ENCODE measurements at regions of chr19 and their contacts with region 1.

Region 1: GRCh38 chr19:5690125-5690954 is at the start of gene RPL36:
- DNase-seq: peak; percentile 97 to 99
- H3K4me3 ChIP-seq: peak within 1 kb of the TSS; percentile 51 to 94 (median 53)
- H3K27ac ChIP-seq: peak within 1 kb of the TSS; percentile 81 to 96 (median 91)
- H3K4me1 ChIP-seq: peaks cover 19 to 28% of the 10 kb centered on the region in 2 donors
- H3K27me3 ChIP-seq: no peaks in the 10 kb centered on the region
- CTCF ChIP-seq: peak; percentile 86 to 100 (median 94)
- POLR2A ChIP-seq: peak; percentile 78 to 96
- total RNA-seq, gene RPL36: 313 to 561 (median 386) TPM

Region 2: GRCh38 chr19:5515737-5516136 is 174.6 kb before region 1 on chr19:
- intact Hi-C with region 1: no loop called
- DNase-seq: no peak
- H3K4me3 ChIP-seq: no peak overlapping the region
- H3K27ac ChIP-seq: no peak overlapping the region
- H3K4me1 ChIP-seq: no peaks in the 10 kb centered on the region
- H3K27me3 ChIP-seq: no peaks in the 10 kb centered on the region
- CTCF ChIP-seq: no peak
- POLR2A ChIP-seq: no peak

Region 3: DNA sequence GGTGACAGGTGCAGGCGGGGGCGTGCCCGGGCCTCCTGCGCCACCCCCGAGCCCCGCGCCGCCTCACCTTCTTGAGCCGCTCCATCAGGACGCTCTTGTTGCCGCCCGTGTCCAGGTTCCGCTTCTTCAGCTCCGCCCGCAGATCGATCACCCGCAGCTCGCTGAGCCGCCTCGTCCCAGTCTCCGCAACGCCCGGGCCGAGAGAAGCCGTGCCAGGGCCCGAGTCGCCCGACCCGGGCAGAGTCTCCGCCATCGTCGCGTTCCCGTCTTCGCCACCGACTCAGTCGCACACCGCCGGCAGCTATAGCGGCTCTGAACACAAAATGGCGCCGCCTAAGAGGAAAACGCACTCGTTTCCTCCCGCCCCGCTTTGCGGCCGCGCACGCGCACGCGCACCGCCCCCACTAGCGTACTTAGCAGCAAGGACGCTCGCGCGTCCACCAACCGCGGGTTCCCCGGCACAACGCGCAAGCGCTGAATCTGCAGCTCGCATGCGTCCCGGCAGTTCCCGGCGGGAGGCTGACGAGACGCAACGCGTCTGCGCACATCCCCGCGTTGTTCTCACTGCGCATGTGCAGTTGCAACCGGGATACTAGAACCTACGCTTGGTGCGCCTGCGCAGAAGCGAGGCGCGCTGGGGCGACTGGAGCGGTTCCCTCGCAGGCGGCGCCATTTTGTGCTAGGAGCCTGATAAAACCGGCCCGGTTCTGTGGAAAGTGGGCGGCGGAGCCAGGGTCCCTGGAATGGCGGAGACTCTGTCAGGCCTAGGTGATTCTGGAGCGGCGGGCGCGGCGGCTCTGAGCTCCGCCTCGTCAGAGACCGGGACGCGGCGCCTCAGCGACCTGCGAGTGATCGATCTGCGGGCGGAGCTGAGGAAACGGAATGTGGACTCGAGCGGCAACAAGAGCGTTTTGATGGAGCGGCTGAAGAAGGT is 67.6 kb before region 1 on chr19 and contains the starts of genes SAFB and SAFB2:
- intact Hi-C with region 1: loop called (anchors 10 kb)
- DNase-seq: peak; percentile 99 to 100
- H3K4me3 ChIP-seq: peak within 1 kb of the TSS; percentile 75 to 99 (median 98)
- H3K27ac ChIP-seq: peak within 1 kb of the TSS; percentile 87 to 95 (median 94)
- H3K4me1 ChIP-seq: peaks cover 35 to 56% of the 10 kb centered on the region in 2 donors
- H3K27me3 ChIP-seq: no peaks in the 10 kb centered on the region
- CTCF ChIP-seq: no peak
- POLR2A ChIP-seq: peak; percentile 85 to 93
- total RNA-seq, gene SAFB: 70.1 to 129 (median 86.7) TPM
- total RNA-seq, gene SAFB2: 52.2 to 74.5 (median 65.3) TPM

Region 4: GRCh38 chr19:5637971-5638370 is 52.4 kb before region 1 on chr19:
- intact Hi-C with region 1: no loop called
- DNase-seq: no peak
- H3K4me3 ChIP-seq: no peak overlapping the region
- H3K27ac ChIP-seq: no peak overlapping the region
- H3K4me1 ChIP-seq: peaks cover 5 to 14% of the 10 kb centered on the region in 2 donors
- H3K27me3 ChIP-seq: no peaks in the 10 kb centered on the region
- CTCF ChIP-seq: no peak
- POLR2A ChIP-seq: no peak

Region 5: DNA sequence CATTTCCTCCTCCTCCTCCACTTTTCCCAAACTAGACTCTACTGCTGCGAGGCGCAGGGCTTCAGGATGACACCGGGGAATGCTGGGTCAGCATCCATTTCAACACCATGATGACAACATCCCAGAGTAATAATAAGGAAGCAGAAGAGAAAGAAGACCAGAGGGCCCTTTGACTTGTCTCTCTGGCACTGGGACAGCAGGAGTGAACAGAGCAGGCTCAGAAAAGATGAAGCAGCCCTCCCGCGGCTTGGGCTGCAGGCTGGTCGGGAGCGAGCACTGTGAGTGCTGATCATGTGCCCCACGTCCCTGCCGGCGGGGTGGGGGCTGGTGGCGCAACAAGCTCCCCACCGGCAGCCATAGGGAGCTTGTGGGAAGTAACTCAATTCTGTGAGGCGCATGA is 257.1 kb after region 1 on chr19:
- intact Hi-C with region 1: no loop called
- DNase-seq: peak in 1 of 2 donors; percentile 39
- H3K4me3 ChIP-seq: no peak overlapping the region
- H3K27ac ChIP-seq: peak overlapping the region in 2 of 3 donors; percentile 72 to 74
- H3K4me1 ChIP-seq: peaks cover 46 to 63% of the 10 kb centered on the region in 2 donors
- H3K27me3 ChIP-seq: no peaks in the 10 kb centered on the region
- CTCF ChIP-seq: no peak
- POLR2A ChIP-seq: no peak